ENCODE measurements at regions of chr19 and their contacts with region 1.

Region 1: GRCh38 chr19:32201636-32202051 is 143.8 kb upstream of the ZNF507 start:
- DNase-seq: peak; percentile 41
- H3K4me3 Mint-ChIP-seq: no peak overlapping the region
- H3K27ac Mint-ChIP-seq: no peak overlapping the region
- H3K4me1 Mint-ChIP-seq: peaks cover 12% of the 10 kb centered on the region
- H3K27me3 Mint-ChIP-seq: peaks cover 2% of the 10 kb centered on the region

Region 2: DNA sequence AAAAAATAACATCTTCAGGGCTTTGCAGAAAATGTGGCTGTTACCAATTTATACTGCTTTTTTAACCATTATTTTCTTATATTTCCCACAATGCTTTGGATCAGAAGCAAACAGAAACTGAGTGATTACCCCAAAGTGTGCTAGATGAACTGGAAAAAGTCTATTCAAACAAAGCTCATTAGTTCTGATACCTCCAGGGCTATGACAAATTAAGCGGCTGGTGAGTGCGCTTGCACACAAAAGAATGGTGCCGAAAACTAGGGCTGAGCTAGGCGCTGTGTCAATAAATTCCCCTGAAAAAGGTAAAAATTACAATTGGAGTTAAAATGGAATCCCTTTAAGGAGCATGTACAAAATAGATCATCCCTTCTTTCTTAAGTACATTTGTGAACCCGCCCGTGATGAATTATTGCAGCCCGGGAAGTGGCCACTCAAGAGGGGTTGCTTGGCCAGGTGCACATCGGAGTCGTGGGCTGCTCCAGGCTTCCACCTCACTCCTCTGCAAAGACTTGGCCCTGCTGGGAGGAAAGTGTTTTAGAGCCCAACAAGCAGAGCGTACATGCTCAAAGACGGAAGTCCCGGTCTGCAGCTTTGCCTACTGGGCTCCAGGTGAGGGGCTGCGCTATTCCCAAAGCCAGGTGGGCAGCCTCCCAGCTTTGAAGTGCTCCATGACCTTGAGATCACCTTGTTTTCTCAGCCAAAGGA is 20.3 kb before region 1 on chr19:
- CTCF ChIA-PET with region 1: no interaction called
- POLR2A ChIA-PET with region 1: no interaction called
- DNase-seq: no peak
- H3K4me3 Mint-ChIP-seq: no peak overlapping the region
- H3K27ac Mint-ChIP-seq: no peak overlapping the region
- H3K4me1 Mint-ChIP-seq: no peaks in the 10 kb centered on the region
- H3K27me3 Mint-ChIP-seq: no peaks in the 10 kb centered on the region

Region 3: DNA sequence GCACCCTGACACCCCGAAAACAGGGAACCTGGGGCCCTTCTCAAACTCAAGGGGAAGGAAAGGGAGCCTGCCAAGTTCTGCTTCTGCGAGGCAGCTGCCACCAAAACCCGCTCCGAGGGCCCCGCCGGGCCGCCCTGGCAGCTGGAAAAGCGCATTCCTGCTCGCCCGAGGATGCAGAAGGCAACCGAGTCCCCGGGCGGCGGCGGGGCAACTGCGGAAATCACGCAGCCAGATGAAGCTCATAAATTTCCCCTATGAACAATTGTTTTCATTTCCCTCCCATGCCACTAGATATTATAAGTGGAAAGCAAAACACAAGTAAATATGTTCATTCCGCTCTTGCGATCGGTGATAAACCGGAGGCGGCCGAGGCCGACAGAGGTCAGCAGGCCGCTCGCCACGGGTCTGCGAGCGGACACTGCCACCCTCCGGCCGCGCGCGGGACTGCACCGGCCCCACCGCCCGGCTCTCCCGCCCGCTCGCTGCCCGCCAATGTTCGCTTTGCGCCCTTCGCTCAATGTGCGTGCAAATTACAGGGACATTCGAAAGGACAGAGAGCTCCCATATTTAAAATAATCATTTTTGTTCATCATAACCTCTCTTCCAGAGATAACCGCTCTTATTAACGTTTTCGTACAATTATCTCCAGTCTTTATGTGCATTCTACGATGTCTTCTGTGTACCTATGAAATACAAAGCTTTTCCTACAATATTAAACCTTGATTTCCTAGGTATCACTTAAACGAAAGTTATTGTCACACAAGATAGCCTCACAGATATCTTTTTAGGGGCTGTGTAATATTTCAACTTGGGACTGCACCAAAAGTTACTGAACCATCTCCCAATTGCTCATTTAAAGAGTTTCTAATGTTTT is 23.0 kb after region 1 on chr19:
- CTCF ChIA-PET with region 1: interaction called, 15 read pairs
- POLR2A ChIA-PET with region 1: interaction called, 3 read pairs
- DNase-seq: peak; percentile 55
- H3K4me3 Mint-ChIP-seq: no peak overlapping the region
- H3K27ac Mint-ChIP-seq: no peak overlapping the region
- H3K4me1 Mint-ChIP-seq: peaks cover 10% of the 10 kb centered on the region
- H3K27me3 Mint-ChIP-seq: peaks cover 32% of the 10 kb centered on the region

Region 4: DNA sequence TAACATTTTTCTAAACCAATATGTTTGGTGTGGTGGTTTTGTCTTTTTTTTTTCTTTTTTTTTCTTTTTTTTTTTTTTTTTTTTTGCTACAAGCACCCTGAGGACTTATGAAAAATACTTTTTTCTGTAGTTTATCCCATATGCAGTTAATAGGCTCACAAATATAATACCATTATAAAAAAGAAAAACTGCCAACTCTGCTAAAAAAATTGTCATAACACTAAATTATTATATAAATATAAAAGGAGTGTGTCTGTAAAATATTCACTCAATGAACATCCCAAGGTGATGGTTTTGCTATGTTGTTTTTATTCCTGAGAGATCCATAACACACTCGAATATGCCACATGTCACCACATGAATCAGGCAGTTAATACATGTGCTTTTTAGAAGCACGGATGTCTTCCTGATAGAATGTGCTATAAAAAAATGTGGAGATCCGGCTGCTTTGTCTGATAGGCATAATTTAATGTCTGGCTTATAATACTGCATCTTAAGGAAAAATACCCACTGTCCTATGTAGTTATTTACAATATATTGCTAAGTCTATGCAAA is 33.1 kb after region 1 on chr19:
- CTCF ChIA-PET with region 1: no interaction called
- POLR2A ChIA-PET with region 1: no interaction called
- DNase-seq: no peak
- H3K4me3 Mint-ChIP-seq: no peak overlapping the region
- H3K27ac Mint-ChIP-seq: no peak overlapping the region
- H3K4me1 Mint-ChIP-seq: no peaks in the 10 kb centered on the region
- H3K27me3 Mint-ChIP-seq: peaks cover 2% of the 10 kb centered on the region

Region 5: DNA sequence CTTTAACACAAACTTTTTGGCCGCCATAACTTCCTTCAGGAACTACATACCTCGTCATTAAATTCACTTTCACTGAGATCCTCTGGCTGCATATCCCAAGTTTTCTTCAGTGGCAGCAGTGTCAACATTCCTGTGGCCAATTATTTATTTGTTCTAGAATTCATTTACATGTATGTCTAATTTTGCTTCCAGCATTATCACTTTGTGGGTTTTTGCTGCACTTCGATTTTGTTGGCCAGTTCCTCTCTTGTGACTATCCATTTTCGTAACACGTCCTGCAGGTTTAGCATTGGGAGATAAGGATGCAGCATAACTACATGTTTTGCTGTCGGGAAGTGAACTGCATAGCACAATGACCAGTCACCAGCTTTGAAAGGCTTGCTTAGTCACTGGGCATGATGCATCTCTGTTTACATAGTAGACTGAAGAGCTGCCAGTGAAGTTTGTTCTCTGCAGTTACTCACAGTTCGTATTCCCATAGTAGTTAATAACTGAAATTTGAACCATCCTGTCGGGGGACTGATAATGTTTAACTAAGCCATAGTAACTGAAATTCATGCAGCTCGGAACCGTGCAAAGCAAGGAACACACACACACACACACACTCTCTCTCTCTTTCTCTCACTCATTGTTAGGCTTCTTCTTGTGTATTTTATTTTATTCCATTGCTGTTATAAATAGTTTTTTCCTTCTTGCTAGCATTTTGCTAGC is 172.1 kb after region 1 on chr19:
- CTCF ChIA-PET with region 1: no interaction called
- POLR2A ChIA-PET with region 1: no interaction called
- DNase-seq: no peak
- H3K4me3 Mint-ChIP-seq: no peak overlapping the region
- H3K27ac Mint-ChIP-seq: no peak overlapping the region
- H3K4me1 Mint-ChIP-seq: peaks cover 1% of the 10 kb centered on the region
- H3K27me3 Mint-ChIP-seq: no peaks in the 10 kb centered on the region

Measured in activated CD4-positive, alpha-beta memory T cell treated with anti-CD3 and anti-CD28 coated beads, Interleukin-2, amount 10 ng/mL, durations not matched to agents 7 days and 5 days (primary cell).